RWPE1 (cell line): ENCODE measurements at regions of chr20 and their contacts with region 1.

Region 1: GRCh38 chr20:50815162-50815989 is 20.5 kb downstream of the BCAS4 start:
- DNase-seq: no peak
- H3K27ac ChIP-seq: no peak overlapping the region
- CTCF ChIP-seq: no peak

Region 2: GRCh38 chr20:50746138-50746940 is 69.0 kb before region 1 on chr20:
- CTCF ChIA-PET with region 1: no interaction called
- POLR2A ChIA-PET with region 1: no interaction called
- DNase-seq: no peak
- H3K27ac ChIP-seq: no peak overlapping the region
- CTCF ChIP-seq: no peak

Region 3: DNA sequence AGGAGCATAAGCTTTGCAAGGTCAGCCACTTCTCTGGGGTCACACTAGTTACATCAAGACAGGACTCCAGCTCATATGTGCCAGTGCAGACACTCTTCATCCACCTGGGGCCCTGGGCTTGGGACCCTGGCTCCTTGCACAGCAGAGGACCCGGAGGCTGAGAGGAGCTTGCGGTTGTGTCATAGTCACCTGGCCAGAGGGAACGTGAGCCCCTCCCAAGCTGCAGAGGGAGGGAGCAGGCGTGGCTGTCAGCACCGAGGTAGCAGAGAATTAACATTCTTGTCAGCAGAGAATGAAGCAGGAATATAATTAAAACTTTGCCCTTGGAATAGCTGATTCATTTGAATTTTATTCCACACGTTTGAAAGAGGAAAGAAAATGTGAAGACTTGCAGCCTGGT is 16.2 kb after region 1 on chr20:
- CTCF ChIA-PET with region 1: interaction called, 11 read pairs
- POLR2A ChIA-PET with region 1: no interaction called
- DNase-seq: no peak
- H3K27ac ChIP-seq: peak overlapping the region; percentile 31
- CTCF ChIP-seq: no peak

Region 4: GRCh38 chr20:50885781-50886486 is 70.6 kb after region 1 on chr20:
- CTCF ChIA-PET with region 1: interaction called, 16 read pairs
- POLR2A ChIA-PET with region 1: no interaction called
- DNase-seq: no peak
- H3K27ac ChIP-seq: peak overlapping the region; percentile 21
- CTCF ChIP-seq: no peak

Region 5: DNA sequence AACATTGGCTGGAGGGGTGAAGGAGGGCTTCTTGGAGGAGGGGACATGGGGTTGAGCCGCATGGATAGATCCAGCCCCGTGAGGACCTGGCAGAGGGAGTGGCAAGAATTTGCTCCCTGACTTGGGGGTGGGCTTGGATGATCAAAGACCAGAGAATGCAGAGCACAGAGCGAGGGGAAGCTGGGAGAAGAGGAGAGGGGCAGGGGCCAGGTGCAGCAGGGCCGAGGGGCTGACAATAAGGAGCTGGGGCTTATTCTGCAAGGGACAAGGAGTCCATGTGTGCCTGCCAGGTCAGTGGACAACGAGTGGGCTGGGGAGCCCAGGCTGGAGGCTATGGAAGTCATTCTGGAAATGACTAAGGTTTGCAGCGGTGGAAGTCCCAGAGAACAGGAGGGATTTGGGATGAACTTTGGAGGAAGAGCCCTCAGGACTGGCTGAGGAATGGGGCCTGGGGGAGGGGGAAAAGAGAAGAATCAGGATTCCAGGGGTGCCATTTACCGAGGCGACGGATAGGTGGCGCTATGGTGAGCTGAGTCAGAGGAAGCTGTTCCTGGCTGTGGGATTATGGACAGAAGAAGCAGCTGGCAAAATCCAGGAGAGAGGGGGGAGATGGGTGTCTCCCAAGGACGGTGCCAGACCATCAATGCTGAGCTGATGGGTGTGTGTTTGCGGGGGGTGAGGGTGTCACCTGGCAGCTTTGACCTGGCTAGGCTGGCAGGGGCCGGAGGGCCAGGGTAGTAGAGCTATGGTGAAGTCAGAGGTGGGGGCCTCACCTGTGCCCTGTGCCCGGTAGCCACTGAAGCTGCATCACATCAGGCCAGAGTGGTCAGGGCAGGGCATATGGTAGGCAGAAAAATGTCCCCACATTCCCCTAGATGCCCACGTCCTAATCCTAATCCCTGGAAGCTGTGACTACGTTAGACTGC is 199.7 kb after region 1 on chr20:
- CTCF ChIA-PET with region 1: no interaction called
- POLR2A ChIA-PET with region 1: no interaction called
- DNase-seq: peak; percentile 91
- H3K27ac ChIP-seq: no peak overlapping the region
- CTCF ChIP-seq: peak; percentile 80